ENCODE measurements at regions of chr18 and their contacts with region 1.

Region 1: DNA sequence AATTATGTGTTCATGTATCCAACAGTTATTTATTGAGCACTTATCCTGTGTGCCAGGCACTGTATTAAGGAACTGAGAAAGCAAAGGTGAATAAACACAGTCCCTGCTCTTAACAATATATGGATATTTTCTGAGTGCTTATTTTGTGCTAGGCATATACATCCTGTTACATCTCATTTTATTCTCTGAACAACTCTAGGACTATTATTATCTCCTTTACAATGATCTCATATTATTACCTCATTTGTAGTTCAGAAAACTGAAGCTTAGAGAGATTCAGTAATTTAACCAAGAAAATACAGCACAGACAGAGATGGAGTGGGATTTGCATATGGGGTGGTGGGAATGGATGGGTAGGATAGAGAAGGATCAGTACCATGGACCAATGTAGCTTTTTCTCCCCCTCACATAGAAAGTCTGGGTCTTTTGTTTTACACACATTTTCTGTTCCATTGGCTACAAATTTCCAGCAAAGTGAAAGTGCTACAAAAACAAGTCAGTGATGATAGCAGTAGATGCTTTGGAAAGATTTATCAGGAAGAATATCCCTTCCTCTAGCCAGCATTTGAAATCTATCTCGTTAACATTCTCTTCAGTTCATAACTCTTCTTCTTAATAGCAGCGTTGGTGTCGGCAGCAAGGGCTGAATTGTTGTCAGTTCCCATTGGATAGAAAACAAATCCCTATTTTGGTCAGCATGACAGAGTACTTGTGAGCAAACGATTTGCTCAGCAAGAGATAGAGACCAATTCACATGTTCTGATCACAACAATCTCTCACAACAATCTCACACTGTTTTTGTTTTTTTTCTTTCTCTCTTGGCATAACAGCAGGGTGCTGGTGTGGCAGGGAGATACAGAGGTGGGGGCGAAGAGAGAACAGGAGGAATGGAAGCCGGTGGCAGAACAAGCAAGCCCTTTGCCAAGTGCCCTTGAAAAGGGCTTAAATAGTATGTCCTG is 102.2 kb upstream of the KCTD1 start:
- DNase-seq: no peak
- CTCF ChIP-seq: no peak

Region 2: GRCh38 chr18:26405190-26405801 is 245.3 kb before region 1 on chr18:
- CTCF ChIA-PET with region 1: interaction called, 10 read pairs
- POLR2A ChIA-PET with region 1: no interaction called
- DNase-seq: peak; percentile 78
- CTCF ChIP-seq: peak; percentile 74

Region 3: DNA sequence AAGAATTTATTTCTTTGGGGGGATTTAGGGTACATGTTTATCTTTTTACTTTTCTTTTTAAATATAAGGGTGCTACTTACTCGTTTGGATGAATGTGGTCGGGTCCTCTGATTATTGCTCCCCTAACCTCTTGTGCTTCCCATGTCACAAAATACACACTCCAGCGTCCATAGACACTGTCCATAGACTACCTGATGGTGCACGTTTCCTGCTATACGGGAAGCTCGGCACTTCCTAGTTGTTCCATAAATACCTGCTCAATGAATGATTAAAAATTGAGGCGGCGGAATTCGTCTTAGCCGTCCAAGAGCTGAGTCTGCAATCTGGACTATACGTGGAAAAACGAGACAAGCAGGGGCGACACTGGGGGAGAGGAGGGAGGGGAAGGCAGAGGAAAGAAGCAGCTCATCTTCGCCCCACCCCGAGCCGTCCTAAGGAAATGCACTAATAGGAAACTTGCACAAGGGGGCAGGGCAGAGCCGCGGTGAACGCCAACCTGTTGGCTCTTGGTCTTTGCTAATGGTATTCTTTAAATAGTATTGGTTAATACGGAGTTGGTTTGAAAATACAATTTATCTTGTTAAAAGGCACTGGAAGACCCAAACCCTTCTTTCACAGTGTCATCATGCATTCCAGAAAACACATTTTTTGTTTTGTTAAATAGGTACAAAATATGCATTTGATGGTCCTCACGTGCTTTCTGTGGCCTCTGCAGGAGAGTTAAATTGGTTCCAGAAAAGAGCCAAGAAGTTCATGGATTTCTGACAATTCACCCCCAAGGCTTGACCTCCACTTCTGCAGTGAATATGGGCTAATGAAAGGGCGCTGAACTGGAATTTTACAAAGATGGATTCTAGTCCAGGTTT is 29.2 kb before region 1 on chr18:
- CTCF ChIA-PET with region 1: interaction called, 15 read pairs
- POLR2A ChIA-PET with region 1: no interaction called
- DNase-seq: peak; percentile 65
- CTCF ChIP-seq: peak; percentile 40

Measured in GM10248 (cell line).